Activated CD8-positive, alpha-beta T cell treated with anti-CD3 and anti-CD28 coated beads, Interleukin-2, amount 10 ng/mL, durations not matched to agents 7 days and 5 days (primary cell): ENCODE measurements at regions of chr22 and their contacts with region 1.

Region 1: DNA sequence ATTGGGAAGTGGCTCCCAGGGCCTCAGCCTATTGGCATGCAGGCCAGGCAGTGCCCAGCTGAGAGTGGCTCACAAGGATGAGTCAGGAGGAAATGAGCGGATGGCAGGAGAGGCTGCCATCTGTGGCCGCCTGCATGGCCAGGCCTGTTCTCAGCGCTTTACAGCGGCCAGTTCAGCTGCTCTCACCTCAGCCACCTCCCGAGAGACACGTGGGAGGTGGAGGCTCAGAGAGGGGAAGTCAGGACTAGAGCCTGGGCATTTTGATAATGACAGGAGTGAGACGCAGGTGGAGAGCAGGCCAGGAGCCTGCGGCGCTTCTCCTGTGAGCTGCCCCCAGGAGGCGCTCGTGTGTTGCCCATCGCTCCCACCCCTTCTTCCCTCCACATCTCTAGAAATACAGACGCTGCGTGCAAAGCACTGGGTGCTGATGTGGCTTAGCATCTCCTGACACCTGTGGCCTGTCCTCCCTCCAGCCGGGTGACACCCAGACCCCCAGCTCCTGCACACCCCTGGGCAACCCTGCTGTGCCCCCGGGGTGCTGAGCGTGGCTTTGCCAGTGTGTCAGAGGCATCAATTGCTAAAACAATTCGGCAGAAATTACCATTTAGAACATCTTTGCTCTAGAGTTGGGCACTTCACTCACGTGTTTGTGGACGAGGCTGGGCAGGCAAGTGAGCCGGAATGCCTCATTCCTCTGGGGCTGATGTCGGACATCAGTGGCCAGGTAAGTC is 21.4 kb upstream of the PANX2 start:
- DNase-seq: peak; percentile 84
- ATAC-seq: peak; percentile 98
- H3K4me3 Mint-ChIP-seq: no peak overlapping the region
- H3K27ac Mint-ChIP-seq: no peak overlapping the region
- H3K4me1 Mint-ChIP-seq: peaks cover 5% of the 10 kb centered on the region
- H3K27me3 Mint-ChIP-seq: no peaks in the 10 kb centered on the region

Region 2: DNA sequence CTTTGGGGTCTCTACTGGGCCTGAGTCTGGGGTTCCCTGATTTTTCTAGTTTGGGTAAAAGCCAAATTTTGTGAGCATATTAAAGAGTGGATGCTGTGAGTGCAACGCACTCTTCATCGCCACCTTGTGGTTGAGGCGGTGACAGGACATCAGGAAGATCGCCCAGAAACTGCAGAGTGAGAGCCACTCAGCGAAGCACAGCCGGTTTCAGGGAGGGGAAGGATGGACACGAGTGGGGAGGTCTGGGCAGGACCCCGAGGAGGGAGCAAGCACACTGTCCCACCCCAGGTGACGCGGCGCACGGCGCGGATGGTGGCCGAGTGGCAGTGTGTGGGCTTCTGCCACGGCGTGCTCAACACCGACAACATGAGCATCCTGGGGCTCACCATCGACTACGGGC is 60.7 kb after region 1 on chr22:
- CTCF ChIA-PET with region 1: interaction called, 15 read pairs
- POLR2A ChIA-PET with region 1: interaction called, 4 read pairs
- DNase-seq: peak; percentile 80
- ATAC-seq: peak; percentile 76
- H3K4me3 Mint-ChIP-seq: no peak overlapping the region
- H3K27ac Mint-ChIP-seq: peak overlapping the region; percentile 53
- H3K4me1 Mint-ChIP-seq: peaks cover 14% of the 10 kb centered on the region
- H3K27me3 Mint-ChIP-seq: no peaks in the 10 kb centered on the region